ENCODE measurements at regions of chr2 and their contacts with region 1.

Region 1: GRCh38 chr2:26942543-26943295 is 27.7 kb upstream of the MAPRE3 start:
- DNase-seq: no peak
- H3K4me3 ChIP-seq: no peak overlapping the region
- H3K27me3 ChIP-seq: peaks cover 15% of the 10 kb centered on the region
- CTCF ChIP-seq: peak; percentile 84

Region 2: GRCh38 chr2:26922405-26923188 is 20.1 kb before region 1 on chr2:
- CTCF ChIA-PET with region 1: interaction called, 17 read pairs
- POLR2A ChIA-PET with region 1: no interaction called
- DNase-seq: no peak
- H3K4me3 ChIP-seq: no peak overlapping the region
- H3K27me3 ChIP-seq: peaks cover 6% of the 10 kb centered on the region
- CTCF ChIP-seq: peak; percentile 52

Measured in BJ (cell line).